Activated CD4-positive, alpha-beta T cell treated with anti-CD3 and anti-CD28 coated beads, Interleukin-2, amount 10 ng/mL, durations not matched to agents 24 days and 14 days (primary cell): ENCODE measurements at regions of chr15 and their contacts with region 1.

Region 1: GRCh38 chr15:66497502-66498455 is at the start of gene SNAPC5:
- DNase-seq: peak; percentile 100
- H3K4me3 Mint-ChIP-seq: peak within 1 kb of the TSS; percentile 95
- H3K27ac Mint-ChIP-seq: peak within 1 kb of the TSS; percentile 97
- H3K4me1 Mint-ChIP-seq: peaks cover 47% of the 10 kb centered on the region
- H3K27me3 Mint-ChIP-seq: no peaks in the 10 kb centered on the region
- total RNA-seq, gene SNAPC5: 33.5 and 33.9 TPM in 2 replicates

Region 2: GRCh38 chr15:66293419-66294156 is 204.2 kb before region 1 on chr15 and contains the start of gene DIS3L:
- intact Hi-C with region 1: loop called (anchors 1 kb)
- DNase-seq: peak; percentile 93
- H3K4me3 Mint-ChIP-seq: peak within 1 kb of the TSS; percentile 92
- H3K27ac Mint-ChIP-seq: peak within 1 kb of the TSS; percentile 94
- H3K4me1 Mint-ChIP-seq: peaks cover 40% of the 10 kb centered on the region
- H3K27me3 Mint-ChIP-seq: peaks cover 2% of the 10 kb centered on the region
- total RNA-seq, gene DIS3L: 48.6 and 57.2 TPM in 2 replicates

Region 3: GRCh38 chr15:66472176-66472999 is 25.4 kb before region 1 on chr15:
- intact Hi-C with region 1: loop called (anchors 2 kb)
- DNase-seq: peak; percentile 88
- H3K4me3 Mint-ChIP-seq: peak overlapping the region; percentile 64
- H3K27ac Mint-ChIP-seq: peak overlapping the region; percentile 86
- H3K4me1 Mint-ChIP-seq: peaks cover 51% of the 10 kb centered on the region
- H3K27me3 Mint-ChIP-seq: no peaks in the 10 kb centered on the region